CD4-positive, alpha-beta memory T cell (primary cell): ENCODE measurements at regions of chr7 and their contacts with region 1.

Region 1: DNA sequence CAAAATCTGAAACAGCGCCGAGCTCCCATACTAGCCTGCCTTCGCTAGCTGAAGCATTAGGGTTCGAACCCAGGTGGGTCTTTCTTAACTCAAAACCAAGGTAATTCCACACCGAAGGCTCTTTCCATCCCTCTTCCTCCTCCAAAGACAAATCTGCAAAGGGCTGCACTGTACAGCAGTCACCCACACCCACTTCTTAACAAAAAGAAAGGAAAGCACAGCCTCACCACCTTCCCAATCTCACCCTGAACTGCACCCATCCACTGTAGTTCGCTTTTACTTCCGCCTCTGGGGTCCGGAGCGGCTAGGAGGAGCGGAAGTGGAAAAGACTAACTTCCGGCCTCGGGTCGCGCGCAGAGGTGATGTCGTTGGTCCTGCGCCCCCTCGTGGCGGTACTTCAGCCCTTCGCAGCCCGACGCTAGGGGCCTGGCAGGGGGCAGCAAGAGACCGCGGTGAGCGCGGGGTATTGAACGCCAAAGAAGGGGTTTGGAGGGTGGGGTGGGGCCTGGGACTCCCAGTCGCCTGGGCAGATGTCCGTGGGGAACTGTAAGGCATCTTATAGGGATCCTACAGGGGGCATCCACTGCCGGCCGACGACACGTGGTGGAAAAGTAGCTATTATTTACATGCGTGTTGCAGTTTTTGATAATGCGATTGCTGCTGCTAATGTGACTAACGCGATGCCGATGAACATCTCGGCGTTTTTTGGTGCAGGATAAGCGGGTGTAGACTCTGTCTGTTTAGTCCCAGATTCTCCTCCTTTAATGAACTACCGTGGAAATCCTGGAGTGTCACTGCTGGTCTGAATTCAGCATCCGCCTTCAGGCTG is at the start of gene MTERF1:
- DNase-seq: peak; percentile 89 to 91 (median 90)
- H3K4me3 ChIP-seq: peak within 1 kb of the TSS; percentile 77 to 86
- H3K4me3 Mint-ChIP-seq: peak within 1 kb of the TSS; percentile 92 to 100 (median 98)
- H3K27ac ChIP-seq: peak within 1 kb of the TSS; percentile 71
- H3K27ac Mint-ChIP-seq: peak within 1 kb of the TSS; percentile 88 to 98 (median 95)
- H3K4me1 ChIP-seq: peaks cover 26% of the 10 kb centered on the region
- H3K4me1 Mint-ChIP-seq: peaks cover 30 to 46% (median 35%) of the 10 kb centered on the region in 4 donors
- H3K27me3 ChIP-seq: no peaks in the 10 kb centered on the region
- H3K27me3 Mint-ChIP-seq: no peaks in the 10 kb centered on the region
- total RNA-seq, gene MTERF1: 29.9 to 32.4 TPM

Region 2: DNA sequence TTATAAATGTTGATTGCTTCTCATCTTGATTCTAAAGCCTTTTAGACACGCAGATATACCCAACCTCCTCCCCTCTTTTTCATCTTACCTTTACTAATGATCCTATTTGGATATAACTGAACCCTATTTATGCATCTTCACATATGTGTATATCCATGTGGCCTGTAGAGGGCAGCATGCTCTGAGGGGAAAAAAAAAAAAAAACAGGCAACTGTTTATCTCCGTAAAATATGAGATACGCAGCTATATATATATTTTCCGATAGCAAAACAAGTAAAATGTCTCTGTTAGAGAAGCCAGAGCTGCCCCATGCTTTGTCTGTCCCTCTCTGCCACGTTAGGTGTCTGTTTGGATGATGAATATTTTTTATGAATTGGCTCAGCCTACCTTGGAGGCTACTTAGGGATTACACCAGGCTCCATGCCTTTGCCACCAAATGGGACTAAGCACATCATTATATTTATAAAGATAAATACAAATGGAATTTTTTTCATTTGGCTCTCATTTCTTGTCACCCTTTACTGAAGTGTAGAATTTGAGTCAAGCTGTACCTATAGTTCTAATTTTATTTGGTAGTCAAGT is 791.2 kb before region 1 on chr7:
- CTCF ChIA-PET with region 1: no interaction called
- POLR2A ChIA-PET with region 1: no interaction called
- intact Hi-C with region 1: loop called (anchors 10 kb)
- DNase-seq: peak in 3 of 5 donors; percentile 5 to 12 (median 9)
- H3K4me3 ChIP-seq: no peak overlapping the region
- H3K4me3 Mint-ChIP-seq: peak overlapping the region in 2 of 8 donors; percentile 1 to 37
- H3K27ac ChIP-seq: no peak overlapping the region
- H3K27ac Mint-ChIP-seq: no peak overlapping the region
- H3K4me1 ChIP-seq: peaks cover 6% of the 10 kb centered on the region
- H3K4me1 Mint-ChIP-seq: peaks cover 8 to 17% (median 10%) of the 10 kb centered on the region in 4 donors
- H3K27me3 ChIP-seq: no peaks in the 10 kb centered on the region
- H3K27me3 Mint-ChIP-seq: peaks cover under 1 to 2% of the 10 kb centered on the region in 2 donors

Region 3: GRCh38 chr7:91569728-91570457 is 310.7 kb before region 1 on chr7:
- CTCF ChIA-PET with region 1: no interaction called
- POLR2A ChIA-PET with region 1: no interaction called
- intact Hi-C with region 1: no loop called
- DNase-seq: no peak
- H3K4me3 ChIP-seq: no peak overlapping the region
- H3K4me3 Mint-ChIP-seq: no peak overlapping the region
- H3K27ac ChIP-seq: no peak overlapping the region
- H3K27ac Mint-ChIP-seq: peak overlapping the region in 1 of 7 donors; percentile 5
- H3K4me1 ChIP-seq: no peaks in the 10 kb centered on the region
- H3K4me1 Mint-ChIP-seq: no peaks in the 10 kb centered on the region
- H3K27me3 ChIP-seq: no peaks in the 10 kb centered on the region
- H3K27me3 Mint-ChIP-seq: no peaks in the 10 kb centered on the region

Region 4: GRCh38 chr7:91869661-91870060 is 11.0 kb before region 1 on chr7:
- CTCF ChIA-PET with region 1: interaction called, 12 read pairs
- POLR2A ChIA-PET with region 1: interaction called, 5 read pairs
- intact Hi-C with region 1: no loop called
- DNase-seq: no peak
- H3K4me3 ChIP-seq: no peak overlapping the region
- H3K4me3 Mint-ChIP-seq: no peak overlapping the region
- H3K27ac ChIP-seq: no peak overlapping the region
- H3K27ac Mint-ChIP-seq: no peak overlapping the region
- H3K4me1 ChIP-seq: no peaks in the 10 kb centered on the region
- H3K4me1 Mint-ChIP-seq: peaks cover 9 to 19% (median 15%) of the 10 kb centered on the region in 4 donors
- H3K27me3 ChIP-seq: no peaks in the 10 kb centered on the region
- H3K27me3 Mint-ChIP-seq: no peaks in the 10 kb centered on the region

Region 5: DNA sequence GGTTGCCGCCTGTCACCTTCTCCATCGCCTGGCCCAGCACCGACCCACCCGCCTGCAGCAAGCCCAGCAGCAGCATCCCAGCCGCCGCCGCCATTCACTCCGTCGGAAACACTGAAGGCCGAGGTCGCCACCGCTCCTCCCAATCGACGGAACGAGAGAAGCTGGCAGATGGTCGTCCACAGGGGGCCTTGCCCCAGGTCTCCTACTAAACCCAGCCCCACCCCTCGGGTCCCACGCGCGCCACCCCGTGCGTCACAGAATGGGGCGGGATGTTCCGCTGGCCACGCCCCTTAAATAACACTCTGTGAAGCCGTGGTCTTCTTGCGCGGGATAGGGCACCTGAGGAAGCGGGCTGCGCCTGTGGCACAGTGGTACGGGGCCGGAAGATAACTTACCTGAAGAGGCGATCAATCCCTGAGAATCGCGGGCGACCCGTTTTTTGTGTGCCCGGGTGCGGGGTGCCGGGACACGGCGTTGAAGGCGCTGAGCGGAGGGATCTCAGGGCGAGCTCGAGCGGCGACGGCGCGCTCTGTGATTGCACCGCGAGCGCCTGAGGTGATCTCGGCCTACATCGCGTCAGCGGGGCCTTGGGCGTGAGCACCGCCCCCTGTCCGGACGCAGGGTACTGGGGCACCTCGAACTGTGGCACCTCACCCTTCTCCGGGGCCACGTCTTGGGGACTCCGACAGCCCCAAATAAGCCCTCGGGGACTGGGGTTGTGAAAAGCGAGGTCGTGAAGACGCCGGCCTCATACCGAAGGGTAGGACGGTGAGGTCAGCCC is 253.8 kb after region 1 on chr7 and contains the start of gene CYP51A1:
- CTCF ChIA-PET with region 1: interaction called, 4 read pairs
- POLR2A ChIA-PET with region 1: interaction called, 7 read pairs
- intact Hi-C with region 1: loop called (anchors 1 kb)
- DNase-seq: peak; percentile 94 to 97 (median 95)
- H3K4me3 ChIP-seq: peak within 1 kb of the TSS; percentile 45 to 92
- H3K4me3 Mint-ChIP-seq: peak within 1 kb of the TSS; percentile 96 to 100 (median 99)
- H3K27ac ChIP-seq: peak within 1 kb of the TSS; percentile 77
- H3K27ac Mint-ChIP-seq: peak within 1 kb of the TSS; percentile 97 to 100 (median 100)
- H3K4me1 ChIP-seq: peaks cover 19% of the 10 kb centered on the region
- H3K4me1 Mint-ChIP-seq: peaks cover 18 to 36% (median 26%) of the 10 kb centered on the region in 4 donors
- H3K27me3 ChIP-seq: no peaks in the 10 kb centered on the region
- H3K27me3 Mint-ChIP-seq: no peaks in the 10 kb centered on the region
- total RNA-seq, gene CYP51A1: 14.3 to 15.2 TPM

Region 6: GRCh38 chr7:92588561-92588960 is 707.9 kb after region 1 on chr7:
- CTCF ChIA-PET with region 1: no interaction called
- POLR2A ChIA-PET with region 1: no interaction called
- intact Hi-C with region 1: loop called (anchors 1 kb)
- DNase-seq: peak in 1 of 5 donors; percentile 4
- H3K4me3 ChIP-seq: peak overlapping the region; percentile 82 to 98
- H3K4me3 Mint-ChIP-seq: peak overlapping the region; percentile 87 to 98 (median 96)
- H3K27ac ChIP-seq: peak overlapping the region; percentile 91
- H3K27ac Mint-ChIP-seq: peak overlapping the region; percentile 19 to 97 (median 80)
- H3K4me1 ChIP-seq: peaks cover 58% of the 10 kb centered on the region
- H3K4me1 Mint-ChIP-seq: peaks cover 41 to 72% (median 52%) of the 10 kb centered on the region in 4 donors
- H3K27me3 ChIP-seq: no peaks in the 10 kb centered on the region
- H3K27me3 Mint-ChIP-seq: no peaks in the 10 kb centered on the region